PC-3 (cell line): ENCODE measurements at regions of chr20 and their contacts with region 1.

Region 1: GRCh38 chr20:58650776-58651558 is at the start of gene STX16:
- DNase-seq: peak; percentile 99
- ATAC-seq: peak; percentile 76
- H3K4me3 ChIP-seq: peak within 1 kb of the TSS; percentile 96
- H3K27ac ChIP-seq: peak within 1 kb of the TSS; percentile 85
- H3K4me1 ChIP-seq: peaks cover 65% of the 10 kb centered on the region
- H3K27me3 ChIP-seq: no peaks in the 10 kb centered on the region
- CTCF ChIP-seq: peak; percentile 89
- total RNA-seq, gene STX16: 44.2 and 47.1 TPM in 2 replicates

Region 2: GRCh38 chr20:58236612-58237330 is 414.2 kb before region 1 on chr20:
- CTCF ChIA-PET with region 1: no interaction called
- POLR2A ChIA-PET with region 1: no interaction called
- intact Hi-C with region 1: loop called (anchors 5 kb)
- DNase-seq: peak; percentile 90
- ATAC-seq: peak; percentile 88
- H3K4me3 ChIP-seq: peak overlapping the region; percentile 71
- H3K27ac ChIP-seq: peak overlapping the region; percentile 40
- H3K4me1 ChIP-seq: peaks cover 26% of the 10 kb centered on the region
- H3K27me3 ChIP-seq: no peaks in the 10 kb centered on the region
- CTCF ChIP-seq: peak; percentile 99

Region 3: DNA sequence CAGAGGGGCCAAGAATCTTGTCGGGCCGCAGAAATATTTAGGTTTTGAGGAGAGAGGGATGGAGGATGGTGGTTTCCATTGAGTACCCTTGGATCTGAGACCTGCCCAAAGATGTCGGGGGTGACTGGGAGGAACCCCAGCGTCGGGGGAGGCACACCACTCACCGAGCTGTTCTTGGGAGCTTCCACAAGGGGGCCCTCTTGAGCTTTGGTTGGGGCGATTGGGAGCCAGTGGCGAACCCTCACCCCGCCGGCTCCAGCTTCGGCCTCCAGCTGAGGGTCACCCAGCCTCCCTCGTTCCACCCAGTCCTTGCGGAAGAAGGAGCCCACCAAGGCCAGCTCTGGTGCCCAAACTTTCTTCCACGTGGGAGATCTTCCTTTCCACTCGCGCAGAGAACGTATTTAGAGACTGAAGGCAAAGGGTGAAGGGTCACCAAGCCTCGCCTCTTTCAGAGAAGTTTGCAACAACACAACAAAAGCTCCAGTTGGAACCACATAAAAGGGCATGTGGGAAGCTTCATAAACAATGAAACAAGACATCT is 169.4 kb before region 1 on chr20:
- CTCF ChIA-PET with region 1: interaction called, 15 read pairs
- POLR2A ChIA-PET with region 1: interaction called, 3 read pairs
- intact Hi-C with region 1: loop called (anchors 1 kb)
- DNase-seq: peak; percentile 86
- ATAC-seq: peak; percentile 89
- H3K4me3 ChIP-seq: no peak overlapping the region
- H3K27ac ChIP-seq: no peak overlapping the region
- H3K4me1 ChIP-seq: peaks cover 5% of the 10 kb centered on the region
- H3K27me3 ChIP-seq: no peaks in the 10 kb centered on the region
- CTCF ChIP-seq: peak; percentile 99

Region 4: DNA sequence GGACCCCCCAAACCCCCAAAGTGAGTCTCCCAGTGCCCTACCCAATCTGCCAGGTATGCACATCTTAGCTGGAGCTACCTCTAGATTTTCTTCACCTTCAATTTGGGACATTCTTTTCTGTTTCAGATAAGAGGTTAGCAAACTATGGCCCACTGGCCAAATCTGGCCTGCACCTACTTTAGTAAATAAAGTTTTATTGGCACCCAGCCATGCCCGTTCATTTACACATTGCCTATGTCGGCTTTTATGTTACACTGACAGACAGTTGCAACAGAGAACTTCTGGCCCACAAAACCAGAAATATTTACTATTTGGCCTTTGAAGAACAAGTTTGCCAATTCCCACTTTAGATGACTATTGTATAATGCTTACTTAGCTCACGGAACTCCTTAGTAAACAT is 55.8 kb before region 1 on chr20:
- CTCF ChIA-PET with region 1: no interaction called
- POLR2A ChIA-PET with region 1: interaction called, 10 read pairs
- intact Hi-C with region 1: no loop called
- DNase-seq: peak; percentile 13
- ATAC-seq: no peak
- H3K4me3 ChIP-seq: no peak overlapping the region
- H3K27ac ChIP-seq: no peak overlapping the region
- H3K4me1 ChIP-seq: no peaks in the 10 kb centered on the region
- H3K27me3 ChIP-seq: peaks cover 5% of the 10 kb centered on the region; the same call in 1 of the 2 replicates
- CTCF ChIP-seq: no peak

Region 5: DNA sequence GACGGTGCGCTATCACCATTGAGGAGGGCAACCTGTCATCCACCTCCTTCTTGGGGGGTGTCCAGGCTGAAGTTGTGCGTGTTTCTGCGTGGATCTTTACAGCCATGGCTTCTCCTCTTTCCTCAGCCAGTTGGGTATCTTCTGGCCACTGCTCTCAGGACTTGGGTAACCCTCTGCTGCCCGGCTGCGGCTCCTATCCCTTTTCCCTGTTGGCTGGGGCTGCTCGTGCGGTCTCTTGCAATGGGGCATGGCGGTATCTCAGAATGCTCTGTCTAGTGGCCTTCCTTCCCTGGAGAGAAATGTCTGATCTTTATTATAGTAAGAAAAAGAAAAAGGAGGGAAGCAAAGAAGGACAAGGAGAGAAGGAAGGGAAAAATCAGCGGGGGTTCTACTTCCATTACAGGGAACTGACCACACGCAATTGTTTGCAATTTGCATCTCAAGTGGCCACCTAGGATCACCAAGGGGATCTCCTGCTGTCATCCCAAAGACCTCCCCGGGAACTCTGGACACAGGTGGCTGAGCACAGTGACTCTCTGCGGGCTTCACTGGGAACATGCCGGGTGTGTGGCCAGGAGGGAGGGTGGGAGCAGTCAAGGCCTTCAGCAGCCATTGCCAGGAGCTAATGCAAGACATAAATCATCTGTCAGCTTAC is 102.4 kb after region 1 on chr20:
- CTCF ChIA-PET with region 1: no interaction called
- POLR2A ChIA-PET with region 1: no interaction called
- intact Hi-C with region 1: no loop called
- DNase-seq: no peak
- ATAC-seq: no peak
- H3K4me3 ChIP-seq: no peak overlapping the region
- H3K27ac ChIP-seq: no peak overlapping the region
- H3K4me1 ChIP-seq: no peaks in the 10 kb centered on the region
- H3K27me3 ChIP-seq: peaks cover 96% of the 10 kb centered on the region
- CTCF ChIP-seq: no peak

Region 6: GRCh38 chr20:58778760-58779159 is 127.8 kb after region 1 on chr20:
- CTCF ChIA-PET with region 1: no interaction called
- POLR2A ChIA-PET with region 1: no interaction called
- intact Hi-C with region 1: no loop called
- DNase-seq: no peak
- ATAC-seq: no peak
- H3K4me3 ChIP-seq: no peak overlapping the region
- H3K27ac ChIP-seq: no peak overlapping the region
- H3K4me1 ChIP-seq: no peaks in the 10 kb centered on the region
- H3K27me3 ChIP-seq: peaks cover 98% of the 10 kb centered on the region
- CTCF ChIP-seq: no peak

Region 7: DNA sequence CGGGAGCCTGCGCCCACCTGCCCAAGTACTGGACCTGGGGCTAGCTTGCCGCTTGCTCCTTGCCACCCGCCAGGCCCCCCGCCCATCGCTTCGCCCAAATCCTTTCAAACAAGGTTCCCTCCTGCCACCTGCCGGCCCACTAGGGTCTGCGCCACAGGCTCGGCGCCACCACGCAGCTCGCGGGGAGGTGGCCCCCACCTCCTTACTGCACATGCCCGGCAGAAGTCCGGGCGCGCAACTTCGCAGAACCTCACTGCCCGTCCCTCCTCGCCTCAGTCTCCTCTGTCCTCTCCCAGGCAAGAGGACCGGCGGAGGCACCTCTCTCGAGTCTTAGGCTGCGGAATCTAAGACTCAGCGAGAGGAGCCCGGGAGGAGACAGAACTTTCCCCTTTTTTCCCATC is 188.5 kb after region 1 on chr20:
- CTCF ChIA-PET with region 1: interaction called, 3 read pairs
- POLR2A ChIA-PET with region 1: interaction called, 19 read pairs
- intact Hi-C with region 1: no loop called
- DNase-seq: peak; percentile 71
- ATAC-seq: peak; percentile 87
- H3K4me3 ChIP-seq: peak overlapping the region; percentile 61
- H3K27ac ChIP-seq: no peak overlapping the region
- H3K4me1 ChIP-seq: no peaks in the 10 kb centered on the region
- H3K27me3 ChIP-seq: peaks cover 38% of the 10 kb centered on the region
- CTCF ChIP-seq: peak; percentile 90

Region 8: GRCh38 chr20:59042796-59043660 is 392.1 kb after region 1 on chr20:
- CTCF ChIA-PET with region 1: no interaction called
- POLR2A ChIA-PET with region 1: no interaction called
- intact Hi-C with region 1: loop called (anchors 5 kb)
- DNase-seq: peak; percentile 99
- ATAC-seq: peak; percentile 93
- H3K4me3 ChIP-seq: peak overlapping the region; percentile 72
- H3K27ac ChIP-seq: peak overlapping the region; percentile 87
- H3K4me1 ChIP-seq: peaks cover 55% of the 10 kb centered on the region
- H3K27me3 ChIP-seq: no peaks in the 10 kb centered on the region
- CTCF ChIP-seq: no peak